Activated CD4-positive, alpha-beta T cell treated with anti-CD3 and anti-CD28 coated beads, Interleukin-2, amount 10 ng/mL, durations not matched to agents 24 days and 14 days (primary cell): ENCODE measurements at regions of chr12 and their contacts with region 1.

Region 1: DNA sequence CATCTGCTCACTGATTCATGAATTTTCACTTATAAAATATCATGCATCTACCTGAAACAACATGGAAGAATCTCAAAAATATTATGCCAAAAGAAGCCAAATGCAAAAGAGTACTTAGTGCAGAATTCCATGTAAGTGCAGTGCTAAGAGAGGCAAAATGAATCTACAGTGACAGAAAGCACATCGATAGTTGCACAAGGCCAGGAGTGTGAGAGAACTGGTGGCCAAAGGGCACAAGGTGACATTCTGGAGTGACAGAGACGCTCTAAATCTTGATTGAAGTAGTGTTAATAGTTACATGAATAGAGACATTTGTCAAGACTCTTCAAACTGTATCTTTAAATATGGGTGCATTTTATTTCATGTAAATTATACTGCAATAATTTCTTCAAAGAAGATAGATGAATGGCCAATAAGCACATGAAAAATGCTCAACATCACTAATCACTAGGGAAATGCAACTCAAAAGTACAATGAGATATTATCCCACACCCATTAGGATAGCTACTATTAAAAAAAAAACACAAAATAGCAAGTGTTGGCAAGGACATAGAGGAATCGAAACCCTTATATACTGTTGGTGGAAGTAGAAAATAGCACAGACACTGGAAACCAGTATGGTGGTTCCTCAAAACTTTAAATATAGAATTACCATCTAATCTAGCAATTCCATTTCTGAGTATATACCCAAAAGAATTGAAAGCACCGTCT is 71.7 kb upstream of the KICS2 start:
- DNase-seq: no peak
- H3K4me3 Mint-ChIP-seq: no peak overlapping the region
- H3K27ac Mint-ChIP-seq: no peak overlapping the region
- H3K4me1 Mint-ChIP-seq: peaks cover 3% of the 10 kb centered on the region
- H3K27me3 Mint-ChIP-seq: peaks cover 11% of the 10 kb centered on the region

Region 2: DNA sequence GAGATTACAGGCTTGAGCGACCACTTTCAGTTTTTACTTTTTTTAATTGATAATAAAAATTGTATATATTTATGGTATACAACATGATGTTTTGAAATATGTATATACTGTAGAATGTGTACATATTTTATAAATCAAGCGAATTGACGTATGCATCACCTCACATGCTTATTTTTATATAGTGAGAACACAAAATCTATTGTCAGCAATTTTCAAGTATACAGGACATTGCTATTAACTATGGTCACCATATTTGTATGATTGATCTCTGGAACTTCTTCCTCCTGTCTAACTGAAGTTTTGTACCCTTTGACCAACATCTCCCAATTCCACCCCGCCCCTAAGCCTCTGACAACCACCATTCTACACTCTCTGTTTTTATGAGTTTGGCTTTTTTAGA is 15.4 kb before region 1 on chr12:
- intact Hi-C with region 1: no loop called
- DNase-seq: no peak
- H3K4me3 Mint-ChIP-seq: no peak overlapping the region
- H3K27ac Mint-ChIP-seq: no peak overlapping the region
- H3K4me1 Mint-ChIP-seq: no peaks in the 10 kb centered on the region
- H3K27me3 Mint-ChIP-seq: peaks cover 6% of the 10 kb centered on the region

Region 3: DNA sequence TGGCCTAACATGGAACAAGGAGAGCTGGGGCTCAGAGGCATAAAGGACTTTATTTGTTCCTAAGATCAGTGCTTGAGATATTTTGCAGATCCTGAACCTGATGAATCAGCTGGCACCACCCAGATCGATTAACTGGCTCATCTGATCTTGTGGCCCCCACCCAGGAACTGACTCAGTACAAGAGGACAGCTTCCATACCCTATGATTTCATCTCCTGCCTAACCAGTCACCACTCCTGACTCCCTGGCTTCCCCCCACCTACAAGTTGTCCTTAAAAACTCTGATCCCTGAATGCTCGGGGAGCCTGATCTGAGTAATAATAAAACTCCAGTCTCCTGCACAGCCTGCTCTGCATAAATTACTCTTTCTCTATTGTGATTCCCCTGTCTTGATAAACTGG is 91.7 kb after region 1 on chr12:
- intact Hi-C with region 1: loop called (anchors 5 kb)
- DNase-seq: peak; percentile 75
- H3K4me3 Mint-ChIP-seq: peak overlapping the region; percentile 66
- H3K27ac Mint-ChIP-seq: peak overlapping the region; percentile 90
- H3K4me1 Mint-ChIP-seq: peaks cover 25% of the 10 kb centered on the region
- H3K27me3 Mint-ChIP-seq: peaks cover 6% of the 10 kb centered on the region

Region 4: GRCh38 chr12:64480148-64480547 is 186.3 kb after region 1 on chr12:
- intact Hi-C with region 1: no loop called
- DNase-seq: no peak
- H3K4me3 Mint-ChIP-seq: no peak overlapping the region
- H3K27ac Mint-ChIP-seq: no peak overlapping the region
- H3K4me1 Mint-ChIP-seq: peaks cover 8% of the 10 kb centered on the region
- H3K27me3 Mint-ChIP-seq: no peaks in the 10 kb centered on the region

Region 5: GRCh38 chr12:64583771-64584421 is 290.1 kb after region 1 on chr12:
- intact Hi-C with region 1: no loop called
- DNase-seq: no peak
- H3K4me3 Mint-ChIP-seq: peak overlapping the region; percentile 31
- H3K27ac Mint-ChIP-seq: no peak overlapping the region
- H3K4me1 Mint-ChIP-seq: peaks cover 11% of the 10 kb centered on the region
- H3K27me3 Mint-ChIP-seq: peaks cover 6% of the 10 kb centered on the region

Region 6: GRCh38 chr12:64744422-64745258 is 450.8 kb after region 1 on chr12:
- intact Hi-C with region 1: no loop called
- DNase-seq: no peak
- H3K4me3 Mint-ChIP-seq: no peak overlapping the region
- H3K27ac Mint-ChIP-seq: no peak overlapping the region
- H3K4me1 Mint-ChIP-seq: peaks cover 3% of the 10 kb centered on the region
- H3K27me3 Mint-ChIP-seq: no peaks in the 10 kb centered on the region